Transverse colon (tissue), 4 donors: ENCODE measurements at regions of chr4 and their contacts with region 1.

Region 1: DNA sequence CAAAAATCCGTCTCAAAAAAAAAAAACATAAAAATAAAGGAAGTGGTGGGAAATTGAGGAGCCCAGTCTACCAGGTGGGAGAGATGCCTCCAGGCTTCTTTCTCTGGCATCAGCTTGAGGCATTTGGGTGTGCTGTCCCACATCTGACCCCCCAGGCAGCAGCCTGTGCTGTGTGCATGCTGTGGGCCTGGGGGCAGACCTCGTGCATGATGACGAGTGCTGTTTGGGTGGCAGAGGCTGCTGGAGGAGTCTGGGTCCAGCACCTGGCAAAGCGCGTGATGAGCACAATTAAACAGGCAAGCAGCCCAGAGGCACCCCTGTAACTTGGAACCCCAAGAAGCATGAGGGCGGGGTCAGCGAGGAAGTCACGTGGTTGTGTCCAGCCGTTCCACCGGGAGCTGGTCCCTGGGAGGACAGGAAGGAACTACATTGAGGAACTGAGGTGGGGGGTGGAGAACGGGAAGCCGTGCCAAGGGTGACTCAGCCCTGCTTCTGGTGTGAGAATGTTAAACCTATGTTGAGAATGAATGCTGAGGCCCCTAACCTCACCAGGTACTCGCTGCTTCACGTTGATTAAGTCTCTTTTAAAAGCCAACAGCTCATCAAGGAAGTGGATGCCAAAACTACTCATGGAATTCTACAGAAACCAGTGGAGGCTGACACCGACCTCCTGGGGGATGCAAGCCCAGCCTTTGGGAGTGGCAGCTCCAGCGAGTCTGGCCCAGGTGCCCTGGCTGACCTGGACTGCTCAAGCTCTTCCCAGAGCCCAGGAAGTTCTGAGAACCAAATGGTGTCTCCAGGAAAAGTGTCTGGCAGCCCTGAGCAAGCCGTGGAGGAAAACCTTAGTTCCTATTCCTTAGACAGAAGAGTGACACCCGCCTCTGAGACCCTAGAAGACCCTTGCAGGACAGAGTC is 6.1 kb downstream of the TACC3 start:
- DNase-seq: peak; percentile 54
- H3K4me3 ChIP-seq: no peak overlapping the region
- H3K27ac ChIP-seq: peak overlapping the region; percentile 39 to 53 (median 48)
- H3K4me1 ChIP-seq: peaks cover 0 to 24% (median 8%) of the 10 kb centered on the region in 4 donors
- H3K27me3 ChIP-seq: no peaks in the 10 kb centered on the region
- CTCF ChIP-seq: no peak
- EP300 ChIP-seq: no peak
- POLR2A ChIP-seq: no peak

Region 2: GRCh38 chr4:721261-722168 is 1005.9 kb before region 1 on chr4:
- in situ Hi-C with region 1: no loop called
- intact Hi-C with region 1: no loop called
- DNase-seq: peak; percentile 36
- H3K4me3 ChIP-seq: no peak overlapping the region
- H3K27ac ChIP-seq: no peak overlapping the region
- H3K4me1 ChIP-seq: peaks cover 0 to 34% (median 27%) of the 10 kb centered on the region in 4 donors
- H3K27me3 ChIP-seq: no peaks in the 10 kb centered on the region
- CTCF ChIP-seq: no peak
- EP300 ChIP-seq: no peak
- POLR2A ChIP-seq: no peak

Region 3: GRCh38 chr4:1683736-1684505 is 43.5 kb before region 1 on chr4 and contains the start of gene FAM53A:
- in situ Hi-C with region 1: loop called in 1 of 4 experiments (anchors 5 kb)
- intact Hi-C with region 1: loop called (anchors 2 kb)
- DNase-seq: peak; percentile 96
- H3K4me3 ChIP-seq: peak within 1 kb of the TSS; percentile 65 to 74 (median 68)
- H3K27ac ChIP-seq: peak within 1 kb of the TSS; percentile 82 to 93 (median 90)
- H3K4me1 ChIP-seq: peaks cover 0 to 20% (median 12%) of the 10 kb centered on the region in 4 donors
- H3K27me3 ChIP-seq: no peaks in the 10 kb centered on the region
- CTCF ChIP-seq: no peak
- EP300 ChIP-seq: no peak
- POLR2A ChIP-seq: no peak
- total RNA-seq, gene FAM53A: 1.4 to 32.9 (median 2.7) TPM

Region 4: GRCh38 chr4:1695913-1696312 is 31.5 kb before region 1 on chr4:
- in situ Hi-C with region 1: no loop called
- intact Hi-C with region 1: loop called (anchors 2 kb)
- DNase-seq: no peak
- H3K4me3 ChIP-seq: no peak overlapping the region
- H3K27ac ChIP-seq: no peak overlapping the region
- H3K4me1 ChIP-seq: no peaks in the 10 kb centered on the region
- H3K27me3 ChIP-seq: no peaks in the 10 kb centered on the region
- CTCF ChIP-seq: no peak
- EP300 ChIP-seq: no peak
- POLR2A ChIP-seq: no peak